ENCODE measurements at regions of chr1 and their contacts with region 1.

Region 1: GRCh38 chr1:202888531-202889360 is at the start of gene RABIF:
- DNase-seq: peak; percentile 93 to 97 (median 95)
- ATAC-seq: peak; percentile 94
- H3K4me3 ChIP-seq: peak within 1 kb of the TSS; percentile 90
- H3K4me3 Mint-ChIP-seq: peak within 1 kb of the TSS; percentile 85 to 100 (median 97)
- H3K27ac ChIP-seq: peak within 1 kb of the TSS; percentile 86
- H3K27ac Mint-ChIP-seq: peak within 1 kb of the TSS; percentile 88 to 99 (median 98)
- H3K4me1 ChIP-seq: peaks cover 6 to 12% of the 10 kb centered on the region in 2 donors
- H3K4me1 Mint-ChIP-seq: peaks cover 13 to 37% (median 29%) of the 10 kb centered on the region in 7 donors
- H3K27me3 ChIP-seq: no peaks in the 10 kb centered on the region
- H3K27me3 Mint-ChIP-seq: no peaks in the 10 kb centered on the region
- total RNA-seq, gene RABIF: 11.6 to 17.1 (median 14.5) TPM

Region 2: DNA sequence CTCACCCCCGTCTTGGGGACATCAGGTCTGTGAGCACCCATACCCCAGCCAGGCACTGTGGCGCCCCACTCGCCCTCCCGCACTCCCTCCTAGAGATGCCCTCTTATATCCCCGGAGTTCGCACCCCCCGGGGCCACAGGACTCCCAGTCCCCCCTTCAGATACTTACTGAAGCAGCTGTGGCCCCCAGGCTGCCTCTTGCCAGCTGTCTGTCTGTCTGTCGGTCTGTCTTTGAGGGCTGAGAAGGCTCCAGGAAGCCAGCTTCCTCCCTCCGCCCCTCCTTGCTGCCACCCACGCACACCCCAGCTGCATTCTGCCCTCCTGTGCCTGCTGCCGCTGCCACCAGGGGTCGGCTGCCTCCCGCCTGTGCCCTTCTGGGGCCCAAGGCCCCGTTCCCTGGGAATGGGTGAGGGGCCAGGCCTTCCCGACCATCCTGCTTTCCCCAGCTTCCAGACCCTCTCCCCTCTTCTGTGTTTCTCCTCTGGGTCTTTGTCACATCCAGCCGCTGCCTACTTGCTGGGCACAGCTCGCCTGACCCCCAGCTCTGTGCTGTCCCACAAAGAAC is 728.3 kb before region 1 on chr1 and contains the start of gene PTPN7:
- CTCF ChIA-PET with region 1: no interaction called
- POLR2A ChIA-PET with region 1: no interaction called
- intact Hi-C with region 1: loop called (anchors 2 to 5 kb)
- DNase-seq: peak; percentile 58 to 84 (median 80)
- ATAC-seq: peak; percentile 80
- H3K4me3 ChIP-seq: peak within 1 kb of the TSS; percentile 98
- H3K4me3 Mint-ChIP-seq: peak within 1 kb of the TSS; percentile 91 to 99 (median 98)
- H3K27ac ChIP-seq: peak within 1 kb of the TSS; percentile 90
- H3K27ac Mint-ChIP-seq: peak within 1 kb of the TSS; percentile 97 to 99 (median 98)
- H3K4me1 ChIP-seq: peaks cover 77 to 84% of the 10 kb centered on the region in 2 donors
- H3K4me1 Mint-ChIP-seq: peaks cover 47 to 98% (median 82%) of the 10 kb centered on the region in 7 donors
- H3K27me3 ChIP-seq: no peaks in the 10 kb centered on the region
- H3K27me3 Mint-ChIP-seq: no peaks in the 10 kb centered on the region
- total RNA-seq, gene PTPN7: 43.2 to 258 (median 97.0) TPM

Region 3: DNA sequence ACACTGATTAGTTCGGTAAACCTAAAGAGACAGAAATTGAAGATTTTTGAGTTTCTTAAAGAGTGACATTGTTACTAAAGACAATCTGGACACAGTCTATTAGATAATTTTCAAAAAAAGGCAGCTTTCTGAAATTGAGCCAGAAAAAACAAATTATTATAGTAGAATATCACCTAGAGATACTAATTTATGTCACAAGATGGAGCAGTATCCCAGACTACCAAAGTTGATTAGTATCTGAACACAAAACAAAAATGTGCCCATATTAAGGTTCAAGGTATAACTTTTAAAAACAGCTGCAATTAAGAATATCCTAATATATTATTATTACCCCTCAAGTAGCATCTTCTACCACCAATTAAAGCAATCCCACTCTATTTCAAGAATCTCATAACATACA is 138.0 kb before region 1 on chr1:
- CTCF ChIA-PET with region 1: no interaction called
- POLR2A ChIA-PET with region 1: interaction called, 3 read pairs
- intact Hi-C with region 1: loop called in 1 of 2 experiments (anchors 10 kb)
- DNase-seq: peak in 2 of 9 donors; percentile 4 to 19
- ATAC-seq: no peak
- H3K4me3 ChIP-seq: no peak overlapping the region
- H3K4me3 Mint-ChIP-seq: no peak overlapping the region
- H3K27ac ChIP-seq: no peak overlapping the region
- H3K27ac Mint-ChIP-seq: peak overlapping the region in 1 of 9 donors; percentile 45
- H3K4me1 ChIP-seq: no peaks in the 10 kb centered on the region
- H3K4me1 Mint-ChIP-seq: peaks cover 0 to 5% (median 0%) of the 10 kb centered on the region in 7 donors
- H3K27me3 ChIP-seq: no peaks in the 10 kb centered on the region
- H3K27me3 Mint-ChIP-seq: no peaks in the 10 kb centered on the region

Region 4: GRCh38 chr1:202926720-202927491 is 38.2 kb after region 1 on chr1 and contains the start of gene KLHL12:
- CTCF ChIA-PET with region 1: no interaction called
- POLR2A ChIA-PET with region 1: interaction called, 3 read pairs
- intact Hi-C with region 1: loop called (anchors 1 kb)
- DNase-seq: peak; percentile 88 to 95 (median 94)
- ATAC-seq: peak; percentile 97
- H3K4me3 ChIP-seq: peak within 1 kb of the TSS; percentile 97
- H3K4me3 Mint-ChIP-seq: peak within 1 kb of the TSS; percentile 90 to 96 (median 94)
- H3K27ac ChIP-seq: peak within 1 kb of the TSS; percentile 97
- H3K27ac Mint-ChIP-seq: peak within 1 kb of the TSS; percentile 92 to 97 (median 94)
- H3K4me1 ChIP-seq: peaks cover 19 to 26% of the 10 kb centered on the region in 2 donors
- H3K4me1 Mint-ChIP-seq: peaks cover 17 to 40% (median 34%) of the 10 kb centered on the region in 7 donors
- H3K27me3 ChIP-seq: no peaks in the 10 kb centered on the region
- H3K27me3 Mint-ChIP-seq: peaks cover 0 to 11% (median 0%) of the 10 kb centered on the region in 5 donors
- total RNA-seq, gene KLHL12: 15.6 to 28.0 (median 24.5) TPM

Region 5: DNA sequence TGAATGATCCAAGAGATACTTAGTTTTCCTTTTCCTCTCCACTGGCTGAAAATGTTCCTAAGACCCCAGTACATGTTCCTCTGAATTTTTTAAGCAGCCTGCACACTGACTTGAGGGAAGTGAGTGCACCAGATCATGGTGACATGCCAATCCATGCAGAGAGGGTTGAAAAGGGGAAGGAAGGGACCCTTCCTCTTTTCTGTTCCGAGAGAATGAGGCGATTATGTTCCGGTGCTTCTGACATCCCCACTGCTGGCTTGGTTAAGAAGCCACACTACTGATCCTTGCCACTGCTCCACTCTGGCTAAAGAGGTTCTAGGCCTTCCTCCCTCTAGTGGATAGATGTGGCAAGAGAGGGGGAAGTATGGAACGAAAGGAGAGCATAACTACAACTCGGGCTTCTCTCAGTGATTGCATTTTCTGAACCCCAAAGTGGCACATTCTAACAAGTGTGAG is 80.1 kb after region 1 on chr1:
- CTCF ChIA-PET with region 1: no interaction called
- POLR2A ChIA-PET with region 1: interaction called, 4 read pairs
- intact Hi-C with region 1: loop called in 1 of 2 experiments (anchors 1 kb)
- DNase-seq: peak in 7 of 9 donors; percentile 24 to 64 (median 47)
- ATAC-seq: peak; percentile 73
- H3K4me3 ChIP-seq: no peak overlapping the region
- H3K4me3 Mint-ChIP-seq: peak overlapping the region in 9 of 10 donors; percentile 40 to 98 (median 94)
- H3K27ac ChIP-seq: peak overlapping the region; percentile 83
- H3K27ac Mint-ChIP-seq: peak overlapping the region in 8 of 9 donors; percentile 80 to 96 (median 94)
- H3K4me1 ChIP-seq: peaks cover 14 to 20% of the 10 kb centered on the region in 2 donors
- H3K4me1 Mint-ChIP-seq: peaks cover 15 to 34% (median 27%) of the 10 kb centered on the region in 7 donors
- H3K27me3 ChIP-seq: no peaks in the 10 kb centered on the region
- H3K27me3 Mint-ChIP-seq: peaks cover 0 to 15% (median 0%) of the 10 kb centered on the region in 5 donors

Region 6: GRCh38 chr1:203006948-203007871 is 118.5 kb after region 1 on chr1 and contains the start of gene TMEM183A:
- CTCF ChIA-PET with region 1: interaction called, 3 read pairs
- POLR2A ChIA-PET with region 1: interaction called, 9 read pairs
- intact Hi-C with region 1: loop called (anchors 1 kb)
- DNase-seq: peak; percentile 77 to 95 (median 92)
- ATAC-seq: peak; percentile 96
- H3K4me3 ChIP-seq: peak within 1 kb of the TSS; percentile 91
- H3K4me3 Mint-ChIP-seq: peak within 1 kb of the TSS; percentile 91 to 100 (median 96)
- H3K27ac ChIP-seq: peak within 1 kb of the TSS; percentile 90
- H3K27ac Mint-ChIP-seq: peak within 1 kb of the TSS; percentile 93 to 99 (median 98)
- H3K4me1 ChIP-seq: peaks cover 10 to 14% of the 10 kb centered on the region in 2 donors
- H3K4me1 Mint-ChIP-seq: peaks cover 24 to 46% (median 36%) of the 10 kb centered on the region in 7 donors
- H3K27me3 ChIP-seq: no peaks in the 10 kb centered on the region
- H3K27me3 Mint-ChIP-seq: peaks cover 0 to 4% (median 0%) of the 10 kb centered on the region in 5 donors
- total RNA-seq, gene TMEM183A: 61.4 to 134 (median 77.0) TPM

Measured in naive thymus-derived CD4-positive, alpha-beta T cell (primary cell).